Esophagus muscularis mucosa (tissue), 4 donors: ENCODE measurements at regions of chr1 and their contacts with region 1.

Region 1: DNA sequence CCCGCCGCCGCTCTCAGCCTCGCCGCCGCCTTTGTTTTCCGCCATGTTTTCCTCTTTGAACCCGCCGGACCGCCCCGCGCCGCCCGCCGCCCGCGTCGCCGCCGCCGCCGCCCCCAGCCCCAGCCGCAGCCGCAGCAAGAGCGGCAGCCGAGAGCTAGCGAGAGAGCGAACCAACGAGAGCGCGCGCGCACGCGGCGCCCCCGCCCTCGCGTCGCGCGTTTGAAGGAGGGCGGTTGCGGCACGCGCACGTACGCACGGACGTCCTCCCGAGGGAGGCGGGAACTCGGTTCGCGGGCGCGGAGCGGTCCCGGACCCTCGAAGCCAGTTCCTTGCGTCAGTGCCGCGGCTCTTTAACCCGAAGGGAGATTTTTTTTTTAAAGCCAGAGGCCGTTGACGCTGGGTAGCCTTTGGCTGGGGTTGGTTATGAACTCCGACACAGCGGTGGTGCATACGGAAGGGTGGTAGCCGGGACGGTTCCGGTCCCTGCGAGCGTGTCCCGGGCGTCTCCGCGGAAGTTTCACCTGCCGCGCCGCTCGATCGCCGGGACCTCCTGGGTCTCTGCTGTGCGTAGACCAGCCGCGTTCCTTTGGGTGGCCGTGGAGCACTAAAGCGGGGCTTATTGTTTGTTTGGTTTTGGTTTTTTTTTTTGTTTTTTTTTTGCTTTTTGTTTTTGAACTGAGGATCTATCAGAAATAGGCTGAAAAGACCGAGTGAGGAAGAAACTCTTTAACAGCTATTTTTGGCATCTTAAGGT is at the start of gene TRIM33:
- DNase-seq: peak; percentile 96
- H3K4me3 ChIP-seq: peak within 1 kb of the TSS; percentile 81 to 100 (median 98)
- H3K27ac ChIP-seq: peak within 1 kb of the TSS; percentile 95 to 98 (median 98)
- H3K4me1 ChIP-seq: peaks cover 18 to 46% (median 42%) of the 10 kb centered on the region in 4 donors
- H3K27me3 ChIP-seq: no peaks in the 10 kb centered on the region
- CTCF ChIP-seq: no peak
- EP300 ChIP-seq: no peak
- POLR2A ChIP-seq: peak; percentile 54
- total RNA-seq, gene TRIM33: 28.0 to 36.6 (median 29.5) TPM

Region 2: DNA sequence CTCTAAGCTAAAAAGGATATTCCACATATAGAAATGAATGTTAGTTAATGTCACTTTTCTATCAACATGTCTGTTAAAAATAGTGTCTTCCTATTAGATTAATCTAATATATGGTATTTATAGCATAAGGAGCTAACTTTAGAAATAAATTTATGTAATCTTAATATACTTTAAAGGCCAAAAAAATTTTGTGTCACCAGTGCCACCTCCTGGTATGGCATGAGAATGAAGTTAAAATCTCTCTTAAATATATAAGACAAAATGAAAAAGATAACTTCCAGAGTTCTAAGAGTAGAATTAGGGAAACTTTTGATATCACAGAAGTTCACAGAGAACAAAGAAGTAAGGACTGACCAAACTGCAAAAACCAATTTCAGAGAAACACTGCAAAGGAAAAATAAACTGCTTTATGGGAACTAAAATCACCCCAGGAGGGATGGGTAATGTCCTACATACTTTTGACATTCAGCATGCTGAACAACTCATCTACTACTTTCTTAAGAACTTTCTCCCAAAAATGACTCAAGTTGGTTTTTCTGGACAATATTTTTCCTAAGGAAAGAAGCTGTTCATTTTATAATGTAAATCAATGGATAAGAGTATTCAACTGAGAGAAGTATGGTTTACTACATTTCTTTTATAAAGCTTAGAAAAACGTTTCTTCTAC is 83.0 kb before region 1 on chr1:
- intact Hi-C with region 1: loop called (anchors 5 kb)
- DNase-seq: no peak
- H3K4me3 ChIP-seq: no peak overlapping the region
- H3K27ac ChIP-seq: peak overlapping the region in 1 of 4 donors; percentile 5
- H3K4me1 ChIP-seq: peaks cover 0 to 11% (median 5%) of the 10 kb centered on the region in 4 donors
- H3K27me3 ChIP-seq: no peaks in the 10 kb centered on the region
- CTCF ChIP-seq: peak; percentile 48 to 54 (median 51)
- EP300 ChIP-seq: no peak
- POLR2A ChIP-seq: no peak

Region 3: DNA sequence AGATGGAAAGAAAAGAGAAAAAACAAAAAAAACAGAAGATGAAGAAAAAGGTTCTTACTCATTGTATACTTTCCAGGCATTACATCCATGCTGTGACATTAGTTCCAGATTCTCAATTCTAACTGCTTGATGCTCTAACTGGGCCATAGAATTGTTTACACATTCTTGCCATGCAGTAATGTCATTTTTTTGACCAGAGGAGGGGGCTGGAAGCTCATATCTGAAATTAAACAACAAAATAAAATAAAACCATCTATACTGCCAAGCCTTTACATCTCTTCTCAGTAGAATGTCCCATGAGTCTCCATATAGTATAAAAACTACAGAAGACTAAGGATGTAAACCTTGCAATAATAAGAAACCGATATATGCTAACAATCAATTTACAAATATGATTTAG is 64.3 kb after region 1 on chr1:
- intact Hi-C with region 1: loop called (anchors 5 kb)
- DNase-seq: no peak
- H3K4me3 ChIP-seq: no peak overlapping the region
- H3K27ac ChIP-seq: no peak overlapping the region
- H3K4me1 ChIP-seq: peaks cover 21 to 32% (median 25%) of the 10 kb centered on the region in 4 donors
- H3K27me3 ChIP-seq: no peaks in the 10 kb centered on the region
- CTCF ChIP-seq: no peak
- EP300 ChIP-seq: no peak
- POLR2A ChIP-seq: no peak

Region 4: DNA sequence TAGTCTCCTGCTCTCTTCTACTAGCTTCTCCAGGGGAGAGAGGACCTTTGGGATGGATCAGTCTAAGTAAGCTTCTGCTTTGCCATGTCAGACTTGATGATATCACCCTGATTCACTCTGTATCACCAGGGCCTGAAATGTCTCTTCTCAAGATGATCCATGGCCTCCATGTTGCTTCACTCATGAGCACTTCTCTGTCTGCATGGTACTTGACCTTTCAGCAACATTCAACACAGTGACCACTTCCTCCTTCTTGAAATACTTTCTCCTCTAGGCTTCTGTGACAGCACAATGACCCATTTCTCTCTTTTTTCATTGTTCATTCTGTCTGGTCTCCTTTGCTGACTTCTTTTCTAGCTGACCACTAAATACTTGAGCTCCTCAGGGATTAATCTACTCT is 862.1 kb after region 1 on chr1:
- intact Hi-C with region 1: no loop called
- DNase-seq: no peak
- H3K4me3 ChIP-seq: no peak overlapping the region
- H3K27ac ChIP-seq: no peak overlapping the region
- H3K4me1 ChIP-seq: peaks cover 0 to 5% (median 2%) of the 10 kb centered on the region in 4 donors
- H3K27me3 ChIP-seq: no peaks in the 10 kb centered on the region
- CTCF ChIP-seq: no peak
- EP300 ChIP-seq: no peak
- POLR2A ChIP-seq: no peak